ENCODE measurements at regions of chr1 and their contacts with region 1.

Region 1: DNA sequence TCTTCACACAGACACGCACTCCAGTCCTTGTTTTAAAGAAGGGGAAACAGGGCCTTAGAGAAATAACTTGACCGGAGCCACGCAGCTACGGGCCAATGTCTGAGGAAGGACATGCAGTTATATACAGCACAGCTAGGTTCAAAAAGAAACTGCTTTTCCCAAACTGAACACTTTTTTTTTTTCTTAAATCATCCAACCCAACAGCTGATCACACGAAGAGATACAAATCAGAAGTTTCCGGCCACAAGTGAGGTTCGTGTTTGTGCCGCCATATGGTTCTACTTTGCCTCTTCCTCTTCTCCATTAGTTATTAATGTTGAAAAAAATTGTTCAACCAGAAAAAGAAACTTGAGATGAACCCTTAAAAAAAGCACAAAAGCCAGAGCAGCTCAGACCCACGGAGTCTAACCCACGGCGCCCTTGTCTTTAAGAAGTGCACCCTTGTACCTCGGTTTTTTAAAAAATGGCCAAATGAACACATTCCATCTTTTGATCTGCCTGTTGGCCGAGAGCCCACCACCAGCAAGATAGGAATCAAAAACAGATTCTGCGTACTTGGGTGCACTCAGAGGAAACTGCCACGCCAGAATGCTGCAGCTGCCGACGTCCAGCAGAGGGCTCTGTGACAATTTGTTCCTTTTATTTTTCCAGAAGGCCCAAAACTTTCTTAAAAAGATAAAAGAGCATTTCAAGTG is 78.9 kb downstream of the SLC66A1 start:
- DNase-seq: peak; percentile 59
- H3K4me3 ChIP-seq: peak overlapping the region; percentile 41
- CTCF ChIP-seq: peak; percentile 83

Region 2: GRCh38 chr1:19113697-19114092 is 277.4 kb before region 1 on chr1:
- CTCF ChIA-PET with region 1: no interaction called
- POLR2A ChIA-PET with region 1: no interaction called
- DNase-seq: no peak
- H3K4me3 ChIP-seq: no peak overlapping the region
- CTCF ChIP-seq: peak; percentile 64

Region 3: GRCh38 chr1:19311959-19312781 is 78.9 kb before region 1 on chr1 and contains the starts of genes AKR7A2 and SLC66A1:
- CTCF ChIA-PET with region 1: no interaction called
- POLR2A ChIA-PET with region 1: no interaction called
- DNase-seq: no peak
- H3K4me3 ChIP-seq: peak within 1 kb of the TSS; percentile 83
- CTCF ChIP-seq: no peak

Region 4: DNA sequence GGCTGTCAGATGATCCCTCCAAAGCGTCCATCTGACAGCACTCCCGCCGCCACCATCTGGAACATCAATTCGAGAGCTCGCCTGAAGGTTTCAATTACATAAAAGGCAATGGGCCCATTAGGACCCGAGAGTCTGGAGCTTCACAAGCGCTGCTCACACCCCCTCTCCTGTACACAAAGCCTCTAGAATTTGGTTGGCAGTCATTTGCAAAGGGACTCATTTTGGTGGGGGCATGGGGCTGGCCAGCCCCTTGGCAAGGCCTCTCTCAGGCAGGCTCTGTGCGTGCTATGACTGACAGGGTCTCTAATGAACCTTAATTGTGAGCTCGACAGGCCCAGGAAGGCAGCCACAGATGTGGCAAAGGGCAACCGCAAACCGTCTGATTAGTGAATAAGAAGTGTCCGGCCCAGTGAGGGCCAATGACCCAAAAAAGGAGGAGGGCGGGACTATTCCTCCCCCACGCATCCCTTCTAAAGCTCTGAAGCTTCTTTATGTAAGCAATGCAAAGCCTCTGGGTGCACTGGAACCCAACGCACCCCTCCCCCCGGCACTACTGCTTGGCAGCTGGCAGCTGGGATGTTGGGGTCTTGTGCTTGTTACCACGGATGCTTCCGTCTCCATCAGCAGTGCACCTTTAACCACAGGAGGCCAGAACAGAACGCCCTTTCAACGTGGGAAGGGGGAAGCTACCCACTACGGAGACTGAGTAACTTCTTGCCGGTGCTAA is 14.9 kb after region 1 on chr1:
- CTCF ChIA-PET with region 1: interaction called, 24 read pairs
- POLR2A ChIA-PET with region 1: interaction called, 3 read pairs
- DNase-seq: no peak
- H3K4me3 ChIP-seq: no peak overlapping the region
- CTCF ChIP-seq: no peak

Region 5: DNA sequence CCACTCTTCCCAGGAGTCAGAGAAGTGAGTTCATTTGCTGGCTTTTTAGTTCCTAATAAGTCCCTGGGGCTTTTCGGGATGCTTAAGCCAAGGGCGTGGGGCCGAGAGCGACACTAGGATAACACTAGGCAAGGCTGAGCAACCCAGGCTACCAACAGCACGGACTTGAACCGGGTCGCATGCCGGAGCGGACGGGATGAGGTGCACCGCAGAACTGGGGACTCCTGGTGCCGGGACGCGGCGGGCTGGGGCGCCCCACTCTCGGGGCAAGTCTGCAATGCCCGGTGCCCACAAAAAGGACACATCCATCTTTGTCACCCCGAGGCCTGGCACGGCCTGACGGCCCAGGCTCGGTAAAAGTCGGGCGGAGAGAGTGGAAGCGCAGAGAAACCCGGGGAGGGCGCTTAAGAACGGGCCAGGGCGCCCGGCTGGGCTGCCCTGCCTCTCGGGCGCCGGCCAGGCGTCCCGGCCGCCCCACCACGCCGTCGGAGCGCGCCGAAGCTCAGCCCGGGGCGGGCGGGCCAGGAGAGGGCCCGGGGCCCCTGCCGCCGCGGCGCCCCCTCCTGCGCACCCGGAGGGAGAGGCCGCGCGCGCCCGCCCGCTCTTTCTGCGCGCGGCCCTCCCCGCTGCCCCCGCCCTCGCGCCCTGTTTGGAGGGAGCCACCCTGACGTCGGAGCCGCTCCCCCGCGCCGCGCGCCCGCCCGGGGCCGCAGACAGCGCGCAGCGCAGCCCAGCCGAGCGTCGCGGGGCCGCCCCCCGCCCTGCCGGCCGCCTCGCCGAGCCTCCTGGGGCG is 252.8 kb after region 1 on chr1 and contains the start of gene NBL1:
- CTCF ChIA-PET with region 1: interaction called, 21 read pairs
- POLR2A ChIA-PET with region 1: no interaction called
- DNase-seq: no peak
- H3K4me3 ChIP-seq: peak within 1 kb of the TSS; percentile 70
- CTCF ChIP-seq: no peak

Measured in AG04449 (cell line).